Caco-2 (cell line): ENCODE measurements at regions of chr10 and their contacts with region 1.

Region 1: GRCh38 chr10:11611248-11612020 is at the start of gene USP6NL:
- DNase-seq: peak; percentile 95 to 99
- H3K4me3 ChIP-seq: peak within 1 kb of the TSS; percentile 94
- H3K4me3 Mint-ChIP-seq: peak within 1 kb of the TSS; percentile 82
- H3K27ac Mint-ChIP-seq: peak within 1 kb of the TSS; percentile 81
- H3K4me1 ChIP-seq: peaks cover 46% of the 10 kb centered on the region
- H3K4me1 Mint-ChIP-seq: peaks cover 25% of the 10 kb centered on the region
- H3K27me3 ChIP-seq: no peaks in the 10 kb centered on the region
- H3K27me3 Mint-ChIP-seq: no peaks in the 10 kb centered on the region
- CTCF ChIP-seq: no peak
- total RNA-seq, gene USP6NL: 34.1 and 35.6 TPM in 2 replicates

Region 2: DNA sequence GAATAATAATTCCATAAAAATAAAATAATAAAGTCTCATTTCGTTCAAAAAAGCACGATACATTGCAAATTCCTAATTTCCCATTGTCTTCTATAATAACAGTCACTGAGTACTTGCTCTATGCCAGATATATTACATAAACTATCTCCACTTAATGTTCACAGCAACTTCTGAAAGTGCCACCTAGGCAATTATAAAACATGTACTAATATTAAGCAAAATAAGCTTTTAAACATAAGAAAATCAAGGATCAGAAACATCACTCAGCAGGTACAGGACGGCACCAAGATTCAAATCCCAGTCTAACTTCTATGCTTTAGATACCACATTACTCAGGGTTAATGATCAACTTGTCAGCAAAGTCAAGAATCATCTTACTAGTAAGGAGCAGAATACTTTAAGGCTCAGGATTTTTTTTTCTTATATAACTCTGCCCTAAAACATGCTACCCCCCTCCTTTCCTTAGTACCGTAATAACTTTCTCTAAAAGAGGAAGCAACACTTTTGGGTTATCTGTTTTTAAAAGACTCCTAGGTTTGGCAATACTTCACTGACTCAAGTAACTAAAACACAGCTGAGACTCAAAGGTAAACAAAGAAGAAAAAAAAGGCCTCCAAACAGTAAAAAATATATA is 51.2 kb before region 1 on chr10:
- CTCF ChIA-PET with region 1: no interaction called
- POLR2A ChIA-PET with region 1: no interaction called
- intact Hi-C with region 1: loop called (anchors 2 kb)
- DNase-seq: peak in 1 of 2 experiments; percentile 35
- H3K4me3 ChIP-seq: no peak overlapping the region
- H3K4me3 Mint-ChIP-seq: peak overlapping the region; percentile 56
- H3K27ac Mint-ChIP-seq: no peak overlapping the region
- H3K4me1 ChIP-seq: peaks cover 42% of the 10 kb centered on the region
- H3K4me1 Mint-ChIP-seq: peaks cover 54% of the 10 kb centered on the region
- H3K27me3 ChIP-seq: no peaks in the 10 kb centered on the region
- H3K27me3 Mint-ChIP-seq: no peaks in the 10 kb centered on the region
- CTCF ChIP-seq: no peak

Region 3: DNA sequence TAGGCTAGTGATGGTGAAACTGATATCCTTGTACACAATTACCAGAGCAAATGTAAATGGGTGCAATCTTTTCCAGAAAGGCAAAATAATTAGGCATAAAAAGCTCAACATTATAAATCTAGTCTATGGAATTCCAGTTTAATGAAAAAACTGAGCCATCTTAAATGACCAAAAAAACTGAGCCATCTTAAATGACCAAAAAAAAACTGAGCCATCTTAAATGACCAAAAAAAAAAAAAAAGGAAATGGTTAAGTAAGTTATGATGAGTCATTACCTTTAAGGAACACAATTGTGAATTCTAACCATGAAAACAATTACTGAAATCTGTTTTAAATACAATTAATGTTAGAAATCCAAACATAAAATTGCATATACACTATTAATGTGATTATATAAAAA is 25.3 kb before region 1 on chr10:
- CTCF ChIA-PET with region 1: no interaction called
- POLR2A ChIA-PET with region 1: no interaction called
- intact Hi-C with region 1: no loop called
- DNase-seq: no peak
- H3K4me3 ChIP-seq: no peak overlapping the region
- H3K4me3 Mint-ChIP-seq: no peak overlapping the region
- H3K27ac Mint-ChIP-seq: no peak overlapping the region
- H3K4me1 ChIP-seq: peaks cover 17% of the 10 kb centered on the region
- H3K4me1 Mint-ChIP-seq: peaks cover 29% of the 10 kb centered on the region
- H3K27me3 ChIP-seq: no peaks in the 10 kb centered on the region
- H3K27me3 Mint-ChIP-seq: no peaks in the 10 kb centered on the region
- CTCF ChIP-seq: no peak

Region 4: DNA sequence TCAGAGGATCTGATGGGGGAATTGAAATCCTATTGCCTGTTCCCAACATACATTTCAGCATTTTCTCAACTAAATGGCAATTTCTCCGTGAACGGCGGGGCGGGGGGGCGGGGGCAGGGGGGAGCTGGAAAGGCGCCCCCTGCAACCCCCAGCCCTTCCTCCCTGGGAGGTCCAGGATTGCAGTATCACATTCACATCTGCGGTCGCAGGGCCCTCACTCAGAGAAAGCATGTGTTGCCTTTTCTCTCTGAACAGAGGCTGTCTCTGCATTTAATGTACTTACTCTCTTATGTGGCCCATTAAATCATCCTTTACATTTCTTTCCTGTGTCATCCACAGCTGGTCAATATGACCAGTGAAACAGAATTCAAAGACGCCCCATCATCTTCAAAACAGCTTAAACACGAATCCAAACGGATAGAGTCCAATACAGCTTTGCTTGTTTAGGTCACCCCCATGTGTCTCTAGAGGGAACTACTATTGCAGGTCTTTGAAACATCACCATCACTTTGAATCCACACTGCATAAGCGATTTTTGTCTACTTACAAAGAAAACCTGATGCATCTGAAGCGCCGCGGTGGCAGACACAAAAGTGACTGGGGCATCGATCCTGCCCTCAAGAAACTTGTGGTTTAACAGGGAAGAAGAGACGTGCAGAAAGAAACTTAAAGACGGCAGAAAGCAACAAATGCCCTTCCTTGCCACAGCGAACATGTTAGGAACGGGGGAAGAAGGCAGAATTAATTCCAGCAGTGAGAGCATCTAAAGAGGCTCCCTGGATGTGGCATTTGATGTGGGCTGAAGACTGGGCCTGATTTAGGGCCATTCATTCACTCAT is 113.7 kb after region 1 on chr10:
- CTCF ChIA-PET with region 1: interaction called, 4 read pairs
- POLR2A ChIA-PET with region 1: no interaction called
- intact Hi-C with region 1: loop called (anchors 1 kb)
- DNase-seq: peak in 1 of 2 experiments; percentile 75
- H3K4me3 ChIP-seq: no peak overlapping the region
- H3K4me3 Mint-ChIP-seq: no peak overlapping the region
- H3K27ac Mint-ChIP-seq: no peak overlapping the region
- H3K4me1 ChIP-seq: no peaks in the 10 kb centered on the region
- H3K4me1 Mint-ChIP-seq: peaks cover 8% of the 10 kb centered on the region
- H3K27me3 ChIP-seq: no peaks in the 10 kb centered on the region
- H3K27me3 Mint-ChIP-seq: no peaks in the 10 kb centered on the region
- CTCF ChIP-seq: peak; percentile 86 to 94